Head of caudate nucleus (tissue), 42 donors: ENCODE measurements at regions of chr17 and their contacts with region 1.

Region 1: GRCh38 chr17:48908047-48908843 is at the start of gene UBE2Z:
- DNase-seq: peak; percentile 83 to 98 (median 95)

Region 2: GRCh38 chr17:48860034-48860433 is 48.2 kb before region 1 on chr17:
- intact Hi-C with region 1: no loop called
- DNase-seq: no peak

Region 3: DNA sequence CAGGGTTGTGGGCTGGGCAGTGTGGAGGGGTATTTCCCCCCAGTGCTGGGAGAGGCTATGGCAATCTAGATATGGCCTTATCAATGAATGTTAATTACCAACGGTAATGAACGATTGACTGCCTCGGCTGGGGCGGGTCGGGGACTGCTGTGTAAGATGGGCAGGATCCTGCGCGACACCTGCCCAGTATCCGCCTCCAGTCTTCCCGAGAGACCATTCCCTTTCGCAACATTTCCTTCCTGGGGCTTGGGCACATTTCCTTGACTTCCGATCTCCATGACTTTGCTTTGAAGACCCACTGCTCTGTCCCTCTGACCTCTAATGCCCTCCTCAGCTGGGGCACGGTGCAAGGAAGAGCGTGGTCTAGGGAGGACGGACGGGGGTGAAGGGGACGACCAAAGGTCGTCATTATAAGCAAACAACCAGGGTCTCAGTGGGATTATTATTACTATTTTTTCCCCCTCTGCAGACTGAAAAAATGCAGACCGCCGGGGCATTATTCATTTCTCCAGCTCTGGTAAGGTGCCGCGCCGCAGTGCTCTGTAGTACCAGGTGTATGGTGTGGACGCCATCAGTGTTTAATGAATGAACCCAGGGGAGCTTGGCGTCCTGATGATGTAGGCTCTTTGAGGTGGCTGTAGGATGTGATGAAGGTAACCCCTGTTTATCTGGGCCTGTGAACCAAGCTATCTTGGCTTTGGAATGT is 15.2 kb before region 1 on chr17:
- intact Hi-C with region 1: loop called (anchors 1 kb)
- DNase-seq: no peak

Region 4: GRCh38 chr17:48944519-48945260 is 36.4 kb after region 1 on chr17 and contains the start of gene SNF8:
- intact Hi-C with region 1: loop called (anchors 2 kb)
- DNase-seq: peak; percentile 86 to 96 (median 92)